ENCODE measurements at regions of chr9 and their contacts with region 1.

Region 1: GRCh38 chr9:136488247-136489214 is 5.7 kb upstream of the SEC16A start:
- DNase-seq: no peak
- ATAC-seq: peak; percentile 57
- H3K4me3 ChIP-seq: no peak overlapping the region
- H3K27ac ChIP-seq: no peak overlapping the region
- H3K4me1 ChIP-seq: peaks cover 5 to 21% of the 10 kb centered on the region in 2 experiments
- H3K27me3 ChIP-seq: no peaks in the 10 kb centered on the region
- CTCF ChIP-seq: peak in 2 of 3 experiments; percentile 95 to 96; a peak in 4 of 6 replicates
- POLR2A ChIP-seq: no peak
- RAD21 ChIP-seq: no peak

Region 2: GRCh38 chr9:135641745-135642144 is 846.8 kb before region 1 on chr9:
- CTCF ChIA-PET with region 1: no interaction called
- POLR2A ChIA-PET with region 1: no interaction called
- RAD21 ChIA-PET with region 1: no interaction called
- intact Hi-C with region 1: no loop called
- DNase-seq: no peak
- ATAC-seq: no peak
- H3K4me3 ChIP-seq: no peak overlapping the region
- H3K27ac ChIP-seq: no peak overlapping the region
- H3K4me1 ChIP-seq: no peaks in the 10 kb centered on the region
- H3K27me3 ChIP-seq: no peaks in the 10 kb centered on the region
- CTCF ChIP-seq: no peak
- POLR2A ChIP-seq: no peak
- RAD21 ChIP-seq: no peak

Region 3: DNA sequence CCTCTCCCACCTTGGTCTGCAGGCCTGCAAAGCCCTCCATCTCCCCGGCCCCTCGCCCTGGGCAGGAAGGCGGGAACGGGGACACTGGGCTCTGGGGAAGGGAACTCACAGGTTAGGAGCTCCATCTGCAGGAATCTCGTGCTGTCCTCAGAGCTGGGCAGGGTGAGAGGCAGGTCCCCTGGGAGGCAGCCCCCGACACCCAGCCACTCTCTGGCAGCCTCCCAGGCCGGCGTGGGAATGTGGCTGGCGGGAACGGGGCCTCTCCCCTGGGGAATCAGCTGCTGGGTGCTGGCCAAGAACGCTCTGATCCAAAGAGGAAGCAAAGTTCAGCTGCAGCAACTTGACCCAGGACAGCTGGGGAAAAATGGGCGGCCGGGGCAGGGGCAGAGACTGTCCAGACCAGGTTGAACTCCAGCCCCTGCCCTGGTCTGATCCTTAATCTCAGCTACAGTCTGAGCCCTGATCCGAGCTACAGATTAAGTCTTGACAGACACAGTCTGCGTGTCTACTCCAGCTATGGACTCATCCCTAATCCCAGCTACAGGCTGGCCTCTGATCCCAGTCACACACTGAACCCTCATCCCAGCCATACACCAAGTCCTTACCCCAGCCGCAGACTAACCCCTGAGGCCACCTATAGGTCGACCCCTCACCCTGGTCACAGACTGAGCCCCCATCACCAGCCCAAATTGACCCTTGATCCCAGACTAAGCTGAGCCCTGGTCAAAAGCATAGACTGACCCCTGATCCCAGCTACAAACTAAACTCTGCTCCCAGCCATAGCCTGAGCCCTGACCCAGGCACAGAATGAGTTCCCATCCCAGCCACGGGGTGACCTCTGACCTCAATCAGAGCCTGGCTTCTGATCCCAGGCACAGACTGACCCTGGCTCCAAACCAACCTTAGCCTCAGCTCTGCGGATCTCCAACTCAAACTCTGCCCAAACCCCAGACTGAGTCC is 136.8 kb after region 1 on chr9:
- CTCF ChIA-PET with region 1: interaction called, 108 read pairs
- POLR2A ChIA-PET with region 1: no interaction called
- RAD21 ChIA-PET with region 1: interaction called, 6 to 9 read pairs
- intact Hi-C with region 1: loop called (anchors 1 kb)
- DNase-seq: no peak
- ATAC-seq: peak; percentile 59
- H3K4me3 ChIP-seq: no peak overlapping the region
- H3K27ac ChIP-seq: no peak overlapping the region; the same call in 1 of the 2 replicates
- H3K4me1 ChIP-seq: peaks cover 0 to 4% of the 10 kb centered on the region in 2 experiments; a peak in 2 of 4 replicates
- H3K27me3 ChIP-seq: no peaks in the 10 kb centered on the region
- CTCF ChIP-seq: peak; percentile 24 to 57 (median 33); a peak in 3 of 6 replicates
- POLR2A ChIP-seq: no peak
- RAD21 ChIP-seq: peak; percentile 90

Region 4: GRCh38 chr9:136631038-136632000 is 142.8 kb after region 1 on chr9:
- CTCF ChIA-PET with region 1: interaction called, 108 read pairs
- POLR2A ChIA-PET with region 1: interaction called, 4 read pairs
- RAD21 ChIA-PET with region 1: interaction called, 6 to 9 read pairs
- intact Hi-C with region 1: loop called (anchors 1 kb)
- DNase-seq: peak; percentile 60
- ATAC-seq: peak; percentile 92
- H3K4me3 ChIP-seq: no peak overlapping the region
- H3K27ac ChIP-seq: no peak overlapping the region
- H3K4me1 ChIP-seq: peaks cover 0 to 3% of the 10 kb centered on the region in 2 experiments; a peak in 1 of 4 replicates
- H3K27me3 ChIP-seq: no peaks in the 10 kb centered on the region
- CTCF ChIP-seq: peak; percentile 81 to 85 (median 84); a peak in 5 of 6 replicates
- POLR2A ChIP-seq: no peak
- RAD21 ChIP-seq: peak; percentile 96